ENCODE measurements at regions of chr1 and their contacts with region 1.

Region 1: DNA sequence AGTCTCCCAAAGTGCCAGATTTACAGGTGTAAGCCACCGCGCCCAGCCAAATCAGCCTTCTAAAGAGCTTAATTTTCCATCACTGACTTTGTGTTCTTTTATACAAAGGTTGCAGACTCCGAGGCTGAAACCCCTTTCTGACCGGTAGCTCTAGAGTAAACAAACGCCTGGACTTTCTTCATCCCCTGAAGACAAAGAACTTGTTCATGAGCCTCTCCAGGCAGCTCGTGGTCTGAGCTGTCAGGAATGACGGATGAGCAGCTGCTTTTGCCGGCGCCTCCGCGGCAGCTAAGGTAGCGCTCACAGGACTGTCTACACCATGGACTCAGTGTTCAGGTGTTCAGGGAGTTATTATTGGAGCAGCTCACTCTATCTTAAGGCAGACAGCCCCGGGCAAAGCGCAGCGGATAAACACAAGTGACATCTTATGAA is 128.5 kb upstream of the ERRFI1 start:
- DNase-seq: no peak
- ATAC-seq: no peak
- H3K4me3 Mint-ChIP-seq: no peak overlapping the region
- H3K27ac Mint-ChIP-seq: no peak overlapping the region
- H3K4me1 Mint-ChIP-seq: peaks cover 46% of the 10 kb centered on the region
- H3K27me3 Mint-ChIP-seq: peaks cover 10% of the 10 kb centered on the region

Region 2: DNA sequence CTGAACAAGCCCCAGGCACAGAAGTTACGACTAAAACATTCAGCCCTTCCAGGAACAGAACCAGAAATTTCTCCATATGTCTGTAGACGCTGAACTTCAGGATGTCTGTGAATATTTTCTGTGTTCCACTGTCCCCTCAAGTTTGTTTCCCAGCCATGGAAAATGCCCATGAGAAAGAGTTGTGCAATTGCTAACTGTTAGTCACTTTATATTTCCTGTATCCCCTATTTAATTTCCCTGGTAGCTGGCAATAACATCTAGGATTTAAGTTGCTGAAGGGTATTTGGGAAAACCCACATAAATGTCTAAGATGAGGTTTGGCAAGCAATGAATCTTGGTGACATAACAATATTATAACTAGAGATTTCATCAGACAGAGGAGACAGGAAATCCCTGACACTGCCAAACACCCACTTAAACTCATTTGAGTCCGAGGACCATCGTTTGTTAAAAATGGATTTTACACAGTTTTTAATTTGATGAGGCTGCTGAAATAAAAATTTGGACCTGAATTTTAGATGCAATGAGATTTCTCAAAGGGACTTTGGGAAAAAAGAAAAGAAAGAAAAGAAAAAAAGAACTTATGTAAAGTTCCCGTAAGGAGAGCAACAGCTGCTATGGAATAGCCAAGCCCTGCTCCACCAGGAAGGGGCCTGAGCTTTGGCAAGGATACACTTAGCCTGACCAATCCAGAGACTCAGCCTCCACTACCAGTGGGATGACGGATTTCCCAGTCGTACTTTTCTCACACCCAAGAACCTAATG is 106.8 kb before region 1 on chr1:
- CTCF ChIA-PET with region 1: no interaction called
- POLR2A ChIA-PET with region 1: no interaction called
- intact Hi-C with region 1: loop called in 1 of 2 experiments (anchors 2 kb)
- DNase-seq: no peak
- ATAC-seq: no peak
- H3K4me3 Mint-ChIP-seq: no peak overlapping the region
- H3K27ac Mint-ChIP-seq: peak overlapping the region; percentile 57
- H3K4me1 Mint-ChIP-seq: peaks cover 25% of the 10 kb centered on the region
- H3K27me3 Mint-ChIP-seq: peaks cover 4% of the 10 kb centered on the region

Region 3: GRCh38 chr1:8182034-8182761 is 27.6 kb after region 1 on chr1:
- CTCF ChIA-PET with region 1: no interaction called
- POLR2A ChIA-PET with region 1: no interaction called
- intact Hi-C with region 1: loop called (anchors 1 to 2 kb)
- DNase-seq: peak; percentile 41
- ATAC-seq: peak; percentile 92
- H3K4me3 Mint-ChIP-seq: peak overlapping the region; percentile 16
- H3K27ac Mint-ChIP-seq: peak overlapping the region; percentile 59
- H3K4me1 Mint-ChIP-seq: peaks cover 20% of the 10 kb centered on the region
- H3K27me3 Mint-ChIP-seq: no peaks in the 10 kb centered on the region